Activated CD8-positive, alpha-beta memory T cell treated with anti-CD3 and anti-CD28 coated beads, Interleukin-2, amount 10 ng/mL, durations not matched to agents 7 days and 5 days (primary cell): ENCODE measurements at regions of chr19 and their contacts with region 1.

Region 1: GRCh38 chr19:49546825-49547565 is 19.2 kb downstream of the RCN3 start:
- DNase-seq: peak; percentile 78
- ATAC-seq: peak; percentile 85
- H3K4me3 Mint-ChIP-seq: peak overlapping the region; percentile 23
- H3K27ac Mint-ChIP-seq: peak overlapping the region; percentile 55
- H3K4me1 Mint-ChIP-seq: peaks cover 23% of the 10 kb centered on the region
- H3K27me3 Mint-ChIP-seq: no peaks in the 10 kb centered on the region

Region 2: DNA sequence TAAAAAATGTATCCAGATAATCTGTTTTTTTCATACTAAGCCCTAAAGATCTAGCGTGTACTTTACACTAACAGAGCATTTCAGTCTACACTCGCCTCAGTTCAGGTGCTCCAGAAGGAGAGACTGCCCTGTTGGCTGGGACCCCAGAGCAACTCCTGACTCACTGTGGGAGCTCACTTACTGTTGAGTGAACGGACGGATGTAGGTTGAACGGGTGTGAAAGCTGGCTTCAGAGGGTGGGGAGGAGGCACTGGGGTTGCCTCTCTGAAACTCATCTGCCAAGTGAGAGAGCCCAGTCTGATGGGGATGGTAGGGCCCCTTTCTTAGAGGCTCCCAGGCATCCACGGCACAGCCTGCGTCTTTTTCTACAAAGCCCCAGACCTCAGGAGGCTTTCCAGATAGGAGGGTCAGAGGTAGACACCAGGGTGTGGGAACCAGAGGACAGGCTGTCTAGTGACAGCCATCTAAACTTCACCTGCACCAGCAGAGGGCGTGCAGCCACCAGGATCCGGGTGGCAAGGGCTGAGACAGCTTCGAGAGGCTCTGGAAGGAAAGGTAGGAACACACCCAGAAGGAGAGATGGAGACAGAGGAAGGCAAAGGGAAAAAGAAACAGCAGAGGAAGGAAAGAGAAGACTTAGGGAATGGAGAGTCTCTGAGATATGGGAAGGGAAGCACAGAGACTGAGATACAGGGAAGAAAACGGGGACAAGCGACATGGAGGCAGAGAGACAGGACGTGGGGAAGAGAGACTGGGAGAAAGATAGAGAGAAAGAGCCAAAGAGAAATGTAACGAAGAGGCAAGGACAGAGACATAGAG is 155.2 kb before region 1 on chr19:
- CTCF ChIA-PET with region 1: interaction called, 12 read pairs
- DNase-seq: peak; percentile 87
- ATAC-seq: peak; percentile 91
- H3K4me3 Mint-ChIP-seq: no peak overlapping the region
- H3K27ac Mint-ChIP-seq: peak overlapping the region; percentile 58
- H3K4me1 Mint-ChIP-seq: peaks cover 30% of the 10 kb centered on the region
- H3K27me3 Mint-ChIP-seq: no peaks in the 10 kb centered on the region

Region 3: GRCh38 chr19:49421039-49421877 is 125.7 kb before region 1 on chr19:
- CTCF ChIA-PET with region 1: no interaction called
- DNase-seq: peak; percentile 56
- ATAC-seq: peak; percentile 37
- H3K4me3 Mint-ChIP-seq: peak overlapping the region; percentile 2
- H3K27ac Mint-ChIP-seq: no peak overlapping the region
- H3K4me1 Mint-ChIP-seq: peaks cover 24% of the 10 kb centered on the region
- H3K27me3 Mint-ChIP-seq: peaks cover 89% of the 10 kb centered on the region

Region 4: DNA sequence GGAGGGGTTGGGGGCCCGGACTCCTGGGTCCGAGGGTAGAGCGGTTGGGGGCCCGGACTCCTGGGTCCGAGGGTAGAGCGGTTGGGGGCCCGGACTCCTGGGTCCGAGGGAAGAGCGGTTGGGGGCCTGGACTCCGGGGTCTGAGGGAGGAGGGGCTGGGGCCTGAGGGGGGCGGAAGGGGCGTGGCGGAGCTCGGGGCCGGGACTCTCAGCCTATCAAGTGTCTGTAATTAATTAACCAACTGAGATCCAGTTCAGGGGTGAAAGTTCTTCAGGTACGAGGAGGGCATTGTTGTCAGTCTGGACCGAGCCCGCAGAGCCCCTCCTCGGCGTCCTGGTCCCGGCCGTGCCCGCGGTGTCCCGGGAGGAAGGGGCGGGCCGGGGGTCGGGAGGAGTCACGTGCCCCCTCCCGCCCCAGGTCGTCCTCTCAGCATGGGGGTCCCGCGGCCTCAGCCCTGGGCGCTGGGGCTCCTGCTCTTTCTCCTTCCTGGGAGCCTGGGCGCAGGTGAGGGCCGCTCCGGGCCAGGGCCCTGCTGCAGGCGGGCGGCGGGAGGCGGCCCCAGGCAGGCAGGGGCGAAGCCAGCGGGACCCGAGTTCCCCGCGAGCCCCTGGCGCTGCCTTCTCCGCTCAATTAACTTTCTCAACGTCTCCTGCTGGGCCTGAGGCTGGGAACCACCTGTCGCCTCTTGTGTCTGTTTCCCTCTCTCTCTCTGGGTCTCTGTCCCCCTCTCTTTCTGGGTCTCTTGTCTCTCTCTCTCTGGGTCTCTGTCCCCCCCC is 33.8 kb before region 1 on chr19:
- CTCF ChIA-PET with region 1: interaction called, 17 read pairs
- DNase-seq: no peak
- ATAC-seq: peak; percentile 72
- H3K4me3 Mint-ChIP-seq: peak overlapping the region; percentile 72
- H3K27ac Mint-ChIP-seq: peak overlapping the region; percentile 66
- H3K4me1 Mint-ChIP-seq: peaks cover 18% of the 10 kb centered on the region
- H3K27me3 Mint-ChIP-seq: no peaks in the 10 kb centered on the region

Region 5: DNA sequence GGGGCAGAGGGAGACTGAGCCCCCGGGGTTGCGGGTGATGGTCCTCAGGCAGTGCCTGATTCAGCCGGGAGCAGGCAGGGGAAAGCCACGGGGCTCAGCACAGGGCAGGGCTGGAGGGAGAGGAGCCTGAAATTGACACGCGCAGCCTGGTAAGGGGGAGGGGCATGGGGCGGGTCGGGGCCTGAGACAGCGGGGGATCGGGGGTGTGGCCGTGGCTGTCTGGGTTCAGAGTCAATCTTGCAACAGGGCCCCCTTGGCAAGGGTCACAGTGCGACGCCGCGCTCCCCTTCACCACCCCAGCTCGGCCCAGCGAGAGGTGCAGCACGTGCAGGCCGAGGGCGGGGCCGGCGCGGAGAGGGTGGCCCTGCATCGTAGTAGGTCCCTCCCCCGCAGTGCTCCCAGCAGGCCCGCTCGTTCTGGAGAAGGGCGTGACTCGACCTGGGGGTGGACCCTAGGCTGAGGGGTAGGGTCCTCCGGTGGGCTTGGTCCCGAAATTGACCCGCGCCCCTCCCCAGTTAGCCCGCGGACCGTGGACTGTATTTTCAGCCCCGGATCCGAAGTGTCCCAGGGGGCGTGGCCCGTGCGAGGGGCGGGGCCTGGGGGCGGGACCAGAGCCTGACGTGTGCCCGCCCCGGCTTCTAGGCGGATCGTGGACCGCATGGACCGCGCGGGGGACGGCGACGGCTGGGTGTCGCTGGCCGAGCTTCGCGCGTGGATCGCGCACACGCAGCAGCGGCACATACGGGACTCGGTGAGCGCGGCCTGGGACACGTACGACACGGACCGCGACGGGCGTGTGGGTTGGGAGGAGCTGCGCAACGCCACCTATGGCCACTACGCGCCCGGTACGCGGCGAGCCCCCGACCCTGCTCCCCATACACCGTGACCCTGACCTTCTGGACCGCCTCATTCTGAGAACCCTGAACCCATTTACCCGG is 13.2 kb before region 1 on chr19:
- CTCF ChIA-PET with region 1: interaction called, 28 read pairs
- DNase-seq: peak; percentile 86
- ATAC-seq: peak; percentile 94
- H3K4me3 Mint-ChIP-seq: peak overlapping the region; percentile 74
- H3K27ac Mint-ChIP-seq: peak overlapping the region; percentile 62
- H3K4me1 Mint-ChIP-seq: peaks cover 23% of the 10 kb centered on the region
- H3K27me3 Mint-ChIP-seq: peaks cover 2% of the 10 kb centered on the region

Region 6: GRCh38 chr19:49614096-49614833 is 67.3 kb after region 1 on chr19:
- CTCF ChIA-PET with region 1: no interaction called
- DNase-seq: no peak
- ATAC-seq: peak; percentile 83
- H3K4me3 Mint-ChIP-seq: no peak overlapping the region
- H3K27ac Mint-ChIP-seq: peak overlapping the region; percentile 76
- H3K4me1 Mint-ChIP-seq: peaks cover 16% of the 10 kb centered on the region
- H3K27me3 Mint-ChIP-seq: no peaks in the 10 kb centered on the region

Region 7: GRCh38 chr19:49676690-49677231 is 129.8 kb after region 1 on chr19:
- CTCF ChIA-PET with region 1: interaction called, 11 read pairs
- DNase-seq: peak; percentile 100
- ATAC-seq: peak; percentile 79
- H3K4me3 Mint-ChIP-seq: peak overlapping the region; percentile 74
- H3K27ac Mint-ChIP-seq: peak overlapping the region; percentile 99
- H3K4me1 Mint-ChIP-seq: peaks cover 38% of the 10 kb centered on the region
- H3K27me3 Mint-ChIP-seq: no peaks in the 10 kb centered on the region